Left ventricle myocardium superior (tissue), 1 donor: ENCODE measurements at regions of chr11 and their contacts with region 1.

Region 1: DNA sequence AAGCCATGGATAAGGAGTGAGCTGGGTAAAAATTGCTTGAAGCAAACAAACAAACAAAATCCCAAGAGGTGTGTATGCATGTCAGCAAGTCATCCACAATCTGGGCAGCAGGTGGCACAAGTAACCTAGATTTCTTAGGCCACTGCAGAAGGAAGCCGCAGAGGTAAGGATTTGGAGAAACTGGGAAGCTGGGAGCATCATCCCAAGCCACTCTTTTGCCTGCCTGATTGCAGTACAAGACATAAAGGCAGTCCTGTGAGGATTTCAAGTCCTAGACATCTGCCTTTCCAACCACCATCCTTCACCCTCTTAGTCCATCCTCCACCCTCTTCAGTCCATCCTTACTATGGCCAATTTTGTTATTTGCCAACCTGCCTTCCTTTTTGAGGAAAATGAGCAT is 67.2 kb upstream of the BMAL1 start:
- DNase-seq: peak; percentile 52
- ATAC-seq: peak; percentile 69

Region 2: DNA sequence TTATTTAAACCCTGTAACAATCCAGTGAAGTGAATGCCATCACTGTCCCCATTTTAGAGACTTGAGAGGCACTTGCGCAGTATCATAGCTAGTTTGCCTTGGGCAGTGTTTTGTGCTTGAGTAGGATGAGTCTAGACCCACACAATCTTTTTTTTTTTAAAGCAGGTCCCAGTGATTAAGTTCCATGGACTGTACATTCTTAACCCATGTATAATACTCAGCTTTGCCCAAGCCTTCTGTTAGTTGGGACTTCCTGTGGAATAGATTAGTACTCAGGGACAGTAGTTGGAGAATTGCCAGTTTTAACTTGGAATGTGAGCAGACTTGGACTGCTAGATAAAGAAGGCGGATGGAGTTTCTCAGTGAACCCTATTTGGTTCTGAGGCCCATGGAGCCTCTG is 309.9 kb before region 1 on chr11:
- intact Hi-C with region 1: no loop called
- DNase-seq: no peak
- ATAC-seq: peak; percentile 38

Region 3: GRCh38 chr11:13140028-13140870 is 70.2 kb before region 1 on chr11:
- intact Hi-C with region 1: no loop called
- DNase-seq: no peak
- ATAC-seq: no peak

Region 4: DNA sequence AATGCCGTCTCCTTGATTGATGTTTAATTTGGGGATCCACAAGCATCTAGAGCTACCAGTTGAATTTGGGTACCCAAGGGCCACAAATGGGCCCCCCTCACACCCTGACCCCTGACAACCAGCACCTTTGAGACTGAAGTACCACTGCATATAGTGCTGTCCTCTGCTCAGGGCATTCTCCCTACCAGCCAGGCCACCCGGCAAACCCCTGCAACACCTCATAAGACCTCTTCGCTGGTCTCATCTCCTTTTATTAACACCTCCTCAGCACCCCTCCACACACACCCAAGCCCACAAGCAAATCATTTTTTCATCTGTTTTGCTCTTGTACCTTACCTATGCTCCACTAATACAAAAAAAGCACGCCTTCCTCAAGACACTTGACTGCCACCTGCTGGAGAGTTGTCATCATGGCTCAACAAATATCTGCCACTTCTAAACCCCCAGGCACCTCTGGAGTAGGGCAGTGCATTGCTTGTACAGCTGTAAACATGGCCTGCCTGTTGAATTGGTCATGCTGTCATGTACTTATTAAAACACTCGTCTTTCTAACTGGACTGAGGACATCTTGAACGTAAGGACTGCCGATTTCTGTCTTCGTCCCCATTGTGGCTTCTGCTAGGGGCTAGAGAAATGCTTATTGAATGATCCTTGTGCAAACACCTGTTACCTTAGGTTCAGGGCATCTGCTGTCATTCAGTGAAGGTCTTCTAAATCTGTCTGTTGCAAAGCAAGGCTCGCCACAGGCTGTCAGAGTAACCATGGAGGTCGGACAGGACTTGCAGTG is 133.7 kb after region 1 on chr11:
- intact Hi-C with region 1: loop called (anchors 5 kb)
- DNase-seq: peak; percentile 43
- ATAC-seq: peak; percentile 57